ENCODE measurements at regions of chr3 and their contacts with region 1.

Region 1: DNA sequence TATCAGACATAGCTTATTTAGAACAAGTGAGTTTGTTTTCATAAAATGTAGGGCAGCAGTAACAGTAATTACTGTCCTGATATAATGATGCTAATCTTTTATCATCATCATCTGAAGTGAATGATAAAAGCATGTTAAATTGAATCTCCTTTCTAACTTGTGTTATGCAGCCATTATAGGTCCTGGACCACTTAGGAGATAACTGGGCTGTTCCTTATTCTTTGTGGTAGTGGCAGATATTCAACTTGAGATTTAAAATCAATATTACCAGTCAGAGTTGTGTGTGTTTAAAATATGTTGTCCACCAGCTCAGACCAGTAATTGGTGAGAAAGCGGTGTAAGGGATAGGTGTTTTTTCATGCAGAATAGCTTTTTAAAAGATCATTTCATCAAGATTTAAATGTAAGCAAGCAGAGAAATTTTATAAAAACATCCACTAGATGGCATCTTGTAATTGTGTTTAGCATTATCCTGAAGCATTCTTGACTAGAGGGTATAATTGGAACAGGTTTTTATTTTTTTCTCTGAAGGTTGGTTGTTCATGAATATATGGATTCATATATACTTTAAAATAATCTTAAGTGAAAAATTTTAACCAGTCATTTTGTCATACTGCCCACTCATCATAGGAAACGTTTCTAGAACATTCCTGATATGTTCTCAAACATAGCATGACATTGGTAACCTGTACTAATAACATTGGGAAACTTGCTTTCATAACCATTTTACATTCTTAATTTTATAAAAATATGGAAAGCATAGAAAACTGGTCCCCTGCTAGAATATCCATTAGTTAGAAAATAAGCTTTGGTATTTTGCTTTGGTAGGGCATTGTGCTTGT is 153.9 kb downstream of the BBX start:
- DNase-seq: no peak
- H3K4me3 Mint-ChIP-seq: no peak overlapping the region
- H3K27ac Mint-ChIP-seq: no peak overlapping the region
- H3K4me1 Mint-ChIP-seq: peaks cover 19% of the 10 kb centered on the region
- H3K27me3 Mint-ChIP-seq: no peaks in the 10 kb centered on the region

Region 2: DNA sequence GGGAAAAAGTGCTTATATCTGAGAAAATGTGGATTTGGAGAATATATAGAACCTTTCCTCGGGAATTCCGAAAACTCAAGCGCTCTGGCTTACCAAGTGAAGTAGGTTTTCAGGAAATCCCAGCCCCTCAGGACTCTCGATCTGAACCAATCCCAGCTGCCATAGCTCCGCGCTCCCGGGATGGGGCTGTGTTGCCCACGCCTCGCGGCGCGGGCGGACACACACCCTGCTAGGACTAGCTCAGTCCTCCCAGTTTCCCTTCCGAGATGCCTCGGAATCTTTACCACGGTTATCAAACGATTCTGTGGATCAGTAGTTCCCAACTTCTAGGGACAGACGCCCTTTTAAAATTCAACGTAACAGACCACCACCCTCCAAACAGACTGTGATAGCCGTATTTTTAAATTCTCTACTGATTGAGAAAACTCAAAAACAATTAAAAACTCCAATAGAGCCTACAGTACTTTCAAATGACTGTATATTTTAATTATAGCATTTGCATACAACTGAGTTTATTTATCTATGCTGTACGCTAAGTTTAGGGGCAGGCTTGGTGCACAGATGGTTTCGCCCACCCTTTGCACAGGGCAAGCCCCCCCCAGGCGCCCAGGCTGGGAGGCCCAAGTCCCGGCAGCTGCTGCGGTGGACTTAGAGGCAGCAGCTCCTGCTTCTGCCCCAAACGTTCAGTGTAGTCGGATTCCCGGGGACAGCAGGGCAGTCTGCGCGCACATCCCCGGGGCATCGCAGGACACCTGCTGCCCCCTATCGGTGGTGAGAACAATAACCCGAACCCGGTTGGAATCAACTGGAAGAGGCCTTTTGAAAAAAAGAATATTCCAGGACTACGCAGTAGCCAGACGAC is 247.1 kb before region 1 on chr3:
- intact Hi-C with region 1: loop called (anchors 10 kb)
- DNase-seq: peak; percentile 87
- H3K4me3 Mint-ChIP-seq: peak overlapping the region; percentile 82
- H3K27ac Mint-ChIP-seq: peak overlapping the region; percentile 45
- H3K4me1 Mint-ChIP-seq: peaks cover 14% of the 10 kb centered on the region
- H3K27me3 Mint-ChIP-seq: peaks cover 51% of the 10 kb centered on the region

Region 3: DNA sequence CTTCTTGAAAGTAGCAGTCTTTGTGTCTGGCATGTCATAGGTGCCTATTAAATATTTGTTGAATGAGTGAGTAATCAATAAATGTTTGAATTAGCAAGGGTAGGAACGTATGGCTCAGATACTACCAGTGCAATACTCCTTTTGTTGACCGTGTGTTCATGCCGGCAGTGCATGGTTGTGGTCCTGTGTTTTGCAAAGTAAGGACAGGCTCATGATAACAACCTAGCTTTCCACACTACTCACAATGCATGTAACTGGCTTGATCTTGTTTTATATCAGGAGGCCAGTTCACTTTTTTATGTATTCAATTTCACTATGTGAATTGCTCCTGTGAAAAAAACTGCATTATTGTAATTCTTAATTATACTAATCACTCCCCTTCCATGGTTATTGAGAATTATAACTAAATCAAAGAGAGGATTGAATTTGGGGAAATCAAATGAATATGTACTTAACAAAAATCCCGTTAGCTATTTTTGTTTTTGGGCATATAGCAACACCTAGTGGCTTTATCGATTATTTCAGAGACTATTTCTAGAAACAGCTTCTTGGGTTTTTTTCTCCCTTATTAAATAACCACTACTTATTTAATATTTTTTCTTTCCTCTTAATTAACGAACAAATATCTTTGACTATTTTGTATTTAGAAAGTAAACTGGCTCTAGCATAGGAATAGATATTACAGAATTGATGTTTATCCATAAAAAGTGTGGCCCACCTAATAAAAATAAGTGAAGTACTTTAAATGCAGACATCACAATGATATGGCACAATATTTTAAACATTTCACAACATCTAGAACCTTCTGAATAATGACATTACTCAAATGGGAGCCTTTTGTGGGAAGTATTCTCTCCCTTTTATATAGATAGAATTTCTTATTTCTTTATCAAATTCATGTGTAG is 64.6 kb after region 1 on chr3:
- intact Hi-C with region 1: loop called (anchors 5 kb)
- DNase-seq: no peak
- H3K4me3 Mint-ChIP-seq: no peak overlapping the region
- H3K27ac Mint-ChIP-seq: no peak overlapping the region
- H3K4me1 Mint-ChIP-seq: no peaks in the 10 kb centered on the region
- H3K27me3 Mint-ChIP-seq: no peaks in the 10 kb centered on the region

Region 4: DNA sequence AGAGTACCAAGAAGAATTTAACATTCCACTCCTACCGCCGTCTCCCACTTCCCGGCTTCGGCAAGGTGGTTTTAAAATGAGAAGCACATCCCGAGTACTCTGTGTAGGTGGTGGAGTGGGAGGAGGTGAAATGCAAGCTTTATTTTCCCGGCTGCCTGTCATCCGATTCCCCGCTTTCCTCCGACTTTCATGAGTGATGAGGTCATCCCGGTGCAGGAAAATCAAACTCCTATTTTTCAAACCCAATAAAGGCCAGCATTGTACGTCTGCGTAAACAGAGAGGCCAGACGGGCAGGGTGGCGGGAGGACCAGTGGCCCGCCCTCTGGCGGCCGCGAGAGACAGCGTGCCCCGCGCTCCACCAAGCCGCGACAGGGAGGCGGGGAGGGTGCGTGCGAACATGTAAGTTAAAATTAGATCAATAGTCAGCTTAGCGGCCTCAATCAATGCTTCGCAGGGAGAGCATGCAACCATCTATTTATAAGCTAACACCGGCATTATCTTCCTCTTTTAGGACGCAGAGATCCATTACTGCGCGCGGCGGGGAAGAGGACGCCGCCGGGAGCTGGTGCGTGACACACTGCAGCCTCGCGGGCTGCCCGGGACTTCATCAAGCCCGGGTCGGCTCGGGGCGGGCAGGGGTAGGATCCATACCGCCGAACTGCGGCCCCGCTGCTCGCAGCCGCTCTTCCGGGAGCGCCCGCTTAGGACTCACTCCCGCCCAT is 250.8 kb after region 1 on chr3:
- intact Hi-C with region 1: loop called (anchors 5 kb)
- DNase-seq: peak; percentile 90
- H3K4me3 Mint-ChIP-seq: peak overlapping the region; percentile 87
- H3K27ac Mint-ChIP-seq: peak overlapping the region; percentile 59
- H3K4me1 Mint-ChIP-seq: peaks cover 13% of the 10 kb centered on the region
- H3K27me3 Mint-ChIP-seq: peaks cover 19% of the 10 kb centered on the region

Region 5: GRCh38 chr3:108477511-108478147 is 800.9 kb after region 1 on chr3:
- intact Hi-C with region 1: loop called (anchors 2 kb)
- DNase-seq: peak; percentile 86
- H3K4me3 Mint-ChIP-seq: no peak overlapping the region
- H3K27ac Mint-ChIP-seq: no peak overlapping the region
- H3K4me1 Mint-ChIP-seq: peaks cover 3% of the 10 kb centered on the region
- H3K27me3 Mint-ChIP-seq: peaks cover 10% of the 10 kb centered on the region

Measured in activated CD4-positive, alpha-beta T cell treated with anti-CD3 and anti-CD28 coated beads, Interleukin-2, amount 10 ng/mL, durations not matched to agents 24 days and 14 days (primary cell).